Activated B cell treated with CpG ODN at 0.5 μM for 24 hours (primary cell): ENCODE measurements at regions of chr11 and their contacts with region 1.

Region 1: GRCh38 chr11:14148653-14149273 is 186.2 kb downstream of the SPON1 start:
- DNase-seq: no peak
- ATAC-seq: no peak
- H3K4me3 Mint-ChIP-seq: no peak overlapping the region
- H3K27ac Mint-ChIP-seq: no peak overlapping the region
- H3K4me1 Mint-ChIP-seq: no peaks in the 10 kb centered on the region
- H3K27me3 Mint-ChIP-seq: peaks cover 14% of the 10 kb centered on the region
- CTCF ChIP-seq: no peak

Region 2: GRCh38 chr11:13772223-13773046 is 376.3 kb before region 1 on chr11:
- CTCF ChIA-PET with region 1: no interaction called
- POLR2A ChIA-PET with region 1: no interaction called
- intact Hi-C with region 1: loop called (anchors 1 kb)
- DNase-seq: no peak
- ATAC-seq: peak; percentile 57
- H3K4me3 Mint-ChIP-seq: no peak overlapping the region
- H3K27ac Mint-ChIP-seq: no peak overlapping the region
- H3K4me1 Mint-ChIP-seq: peaks cover 6% of the 10 kb centered on the region
- H3K27me3 Mint-ChIP-seq: peaks cover 15% of the 10 kb centered on the region
- CTCF ChIP-seq: no peak

Region 3: GRCh38 chr11:13955971-13956421 is 192.8 kb before region 1 on chr11:
- CTCF ChIA-PET with region 1: interaction called, 7 read pairs
- POLR2A ChIA-PET with region 1: no interaction called
- intact Hi-C with region 1: loop called (anchors 1 kb)
- DNase-seq: no peak
- ATAC-seq: peak; percentile 65
- H3K4me3 Mint-ChIP-seq: no peak overlapping the region
- H3K27ac Mint-ChIP-seq: no peak overlapping the region
- H3K4me1 Mint-ChIP-seq: no peaks in the 10 kb centered on the region
- H3K27me3 Mint-ChIP-seq: peaks cover 25% of the 10 kb centered on the region
- CTCF ChIP-seq: peak; percentile 16

Region 4: GRCh38 chr11:14107050-14107430 is 41.7 kb before region 1 on chr11:
- CTCF ChIA-PET with region 1: no interaction called
- POLR2A ChIA-PET with region 1: no interaction called
- intact Hi-C with region 1: no loop called
- DNase-seq: no peak
- ATAC-seq: no peak
- H3K4me3 Mint-ChIP-seq: no peak overlapping the region
- H3K27ac Mint-ChIP-seq: no peak overlapping the region
- H3K4me1 Mint-ChIP-seq: peaks cover 7% of the 10 kb centered on the region
- H3K27me3 Mint-ChIP-seq: peaks cover 2% of the 10 kb centered on the region
- CTCF ChIP-seq: no peak